Prostate gland (tissue), 2 donors: ENCODE measurements at regions of chr12 and their contacts with region 1.

Region 1: DNA sequence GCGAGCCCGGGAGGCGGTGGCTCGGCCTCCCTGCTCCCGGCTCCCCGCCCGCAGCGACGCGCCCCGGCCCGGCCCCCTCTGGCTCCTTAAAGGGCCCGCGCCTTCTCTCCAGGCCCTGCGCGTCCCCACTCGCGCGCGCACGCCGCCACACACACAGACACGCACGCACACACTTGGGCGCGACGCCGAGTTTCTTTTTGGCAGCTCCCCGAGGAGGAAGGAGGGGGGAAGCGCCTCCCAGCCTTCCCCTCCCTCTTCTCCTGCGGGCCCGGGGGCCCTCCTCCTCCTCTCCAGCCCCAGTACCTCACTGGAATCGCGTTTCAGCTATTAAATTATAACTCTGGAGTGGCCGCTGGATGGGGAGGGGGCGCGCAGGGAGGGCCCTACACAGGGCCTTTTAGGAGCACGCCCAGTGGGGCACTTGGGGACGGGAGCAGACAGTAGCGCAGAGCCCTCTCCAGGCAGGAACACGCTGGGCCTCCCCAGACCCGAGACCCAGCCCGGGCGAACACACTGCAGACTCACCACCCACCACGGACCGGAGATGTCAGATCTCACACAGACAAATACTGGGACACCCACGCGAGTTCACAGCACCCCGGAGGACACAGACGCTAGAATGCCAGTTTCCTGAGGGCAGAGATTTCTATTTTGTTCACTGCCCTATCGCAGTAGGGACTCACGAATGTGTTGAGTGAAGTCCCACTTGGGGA is 405 bp upstream of the NCOR2 start:
- DNase-seq: peak; percentile 95
- H3K4me3 ChIP-seq: peak overlapping the region; percentile 23 to 76
- H3K27ac ChIP-seq: peak overlapping the region; percentile 87 to 88
- H3K4me1 ChIP-seq: peaks cover 16% of the 10 kb centered on the region
- H3K27me3 ChIP-seq: no peaks in the 10 kb centered on the region
- CTCF ChIP-seq: peak in 2 of 4 experiments; percentile 14 to 42
- POLR2A ChIP-seq: peak; percentile 28

Region 2: DNA sequence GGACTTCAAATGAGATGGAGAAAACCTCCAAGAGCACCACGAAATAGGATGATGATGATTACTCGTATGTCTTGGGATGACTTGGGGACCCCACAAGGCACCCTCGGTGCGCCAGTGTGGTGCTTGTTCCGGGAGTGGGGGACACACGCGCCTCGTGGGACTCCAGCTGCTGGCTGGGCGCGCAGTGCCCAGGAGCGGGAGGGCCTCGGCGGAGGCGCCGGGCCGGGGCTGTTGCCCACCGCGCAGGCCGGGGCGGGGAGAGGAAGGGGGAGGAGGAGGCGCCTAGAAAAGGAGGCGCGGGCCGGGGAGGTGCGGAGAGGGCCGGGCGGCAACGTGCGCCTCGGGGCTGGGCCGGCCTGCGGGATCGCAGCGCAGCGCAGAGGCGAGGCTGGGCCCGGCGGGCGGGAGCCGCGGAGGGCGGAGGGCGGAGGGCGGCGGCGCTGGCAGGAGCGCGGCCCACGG is 273.0 kb before region 1 on chr12 and contains the start of gene RFLNA:
- intact Hi-C with region 1: no loop called
- DNase-seq: no peak
- H3K4me3 ChIP-seq: peak within 1 kb of the TSS; percentile 30 to 44
- H3K27ac ChIP-seq: peak within 1 kb of the TSS in 1 of 2 donors; percentile 34
- H3K4me1 ChIP-seq: peaks cover 4% of the 10 kb centered on the region
- H3K27me3 ChIP-seq: no peaks in the 10 kb centered on the region
- CTCF ChIP-seq: no peak
- POLR2A ChIP-seq: no peak
- total RNA-seq, gene RFLNA: 5.4 to 13.7 TPM

Region 3: GRCh38 chr12:124369055-124369900 is 198.5 kb before region 1 on chr12:
- intact Hi-C with region 1: loop called (anchors 5 kb)
- DNase-seq: peak; percentile 78
- H3K4me3 ChIP-seq: no peak overlapping the region
- H3K27ac ChIP-seq: peak overlapping the region; percentile 94 to 96
- H3K4me1 ChIP-seq: peaks cover 40% of the 10 kb centered on the region
- H3K27me3 ChIP-seq: no peaks in the 10 kb centered on the region
- CTCF ChIP-seq: peak in 3 of 4 experiments; percentile 20 to 76 (median 62)
- POLR2A ChIP-seq: no peak

Region 4: GRCh38 chr12:124457287-124458219 is 110.3 kb before region 1 on chr12:
- intact Hi-C with region 1: loop called (anchors 5 kb)
- DNase-seq: peak; percentile 46
- H3K4me3 ChIP-seq: peak overlapping the region in 1 of 2 donors; percentile 6
- H3K27ac ChIP-seq: peak overlapping the region; percentile 61 to 73
- H3K4me1 ChIP-seq: peaks cover 16% of the 10 kb centered on the region
- H3K27me3 ChIP-seq: no peaks in the 10 kb centered on the region
- CTCF ChIP-seq: no peak
- POLR2A ChIP-seq: no peak

Region 5: GRCh38 chr12:124620751-124621660 is 53.2 kb after region 1 on chr12:
- intact Hi-C with region 1: loop called (anchors 1 kb)
- DNase-seq: peak; percentile 74
- H3K4me3 ChIP-seq: no peak overlapping the region
- H3K27ac ChIP-seq: peak overlapping the region; percentile 43 to 78
- H3K4me1 ChIP-seq: no peaks in the 10 kb centered on the region
- H3K27me3 ChIP-seq: no peaks in the 10 kb centered on the region
- CTCF ChIP-seq: no peak
- POLR2A ChIP-seq: no peak